A673 (cell line): ENCODE measurements at regions of chr12 and their contacts with region 1.

Region 1: GRCh38 chr12:546921-547845 is 87.4 kb downstream of the B4GALNT3 start:
- DNase-seq: peak; percentile 86
- H3K4me3 ChIP-seq: no peak overlapping the region
- H3K27ac ChIP-seq: no peak overlapping the region
- H3K4me1 ChIP-seq: peaks cover 6% of the 10 kb centered on the region
- H3K27me3 ChIP-seq: no peaks in the 10 kb centered on the region
- CTCF ChIP-seq: peak; percentile 99

Region 2: GRCh38 chr12:442235-442884 is 104.8 kb before region 1 on chr12:
- CTCF ChIA-PET with region 1: interaction called, 5 read pairs
- POLR2A ChIA-PET with region 1: no interaction called
- intact Hi-C with region 1: loop called (anchors 1 kb)
- DNase-seq: peak; percentile 74
- H3K4me3 ChIP-seq: no peak overlapping the region
- H3K27ac ChIP-seq: no peak overlapping the region
- H3K4me1 ChIP-seq: no peaks in the 10 kb centered on the region
- H3K27me3 ChIP-seq: no peaks in the 10 kb centered on the region
- CTCF ChIP-seq: peak; percentile 80